MCF 10A (cell line): ENCODE measurements at regions of chr19 and their contacts with region 1.

Region 1: GRCh38 chr19:29714953-29715700 is at the start of gene C19orf12:
- DNase-seq: peak; percentile 44
- H3K4me3 Mint-ChIP-seq: peak within 1 kb of the TSS; percentile 87
- H3K27ac Mint-ChIP-seq: peak within 1 kb of the TSS; percentile 97
- H3K4me1 Mint-ChIP-seq: peaks cover 16% of the 10 kb centered on the region
- H3K27me3 Mint-ChIP-seq: no peaks in the 10 kb centered on the region
- CTCF ChIP-seq: no peak
- total RNA-seq, gene C19orf12: 20.2 and 21.6 TPM in 2 replicates

Region 2: GRCh38 chr19:29212648-29213573 is 502.2 kb before region 1 on chr19 and contains the start of gene UQCRFS1:
- CTCF ChIA-PET with region 1: no interaction called
- POLR2A ChIA-PET with region 1: no interaction called
- intact Hi-C with region 1: loop called (anchors 10 kb)
- DNase-seq: peak; percentile 95
- H3K4me3 Mint-ChIP-seq: peak within 1 kb of the TSS; percentile 89
- H3K27ac Mint-ChIP-seq: peak within 1 kb of the TSS; percentile 92
- H3K4me1 Mint-ChIP-seq: peaks cover 13% of the 10 kb centered on the region
- H3K27me3 Mint-ChIP-seq: peaks cover 4% of the 10 kb centered on the region
- CTCF ChIP-seq: no peak
- total RNA-seq, gene UQCRFS1: 40.0 and 44.4 TPM in 2 replicates

Region 3: DNA sequence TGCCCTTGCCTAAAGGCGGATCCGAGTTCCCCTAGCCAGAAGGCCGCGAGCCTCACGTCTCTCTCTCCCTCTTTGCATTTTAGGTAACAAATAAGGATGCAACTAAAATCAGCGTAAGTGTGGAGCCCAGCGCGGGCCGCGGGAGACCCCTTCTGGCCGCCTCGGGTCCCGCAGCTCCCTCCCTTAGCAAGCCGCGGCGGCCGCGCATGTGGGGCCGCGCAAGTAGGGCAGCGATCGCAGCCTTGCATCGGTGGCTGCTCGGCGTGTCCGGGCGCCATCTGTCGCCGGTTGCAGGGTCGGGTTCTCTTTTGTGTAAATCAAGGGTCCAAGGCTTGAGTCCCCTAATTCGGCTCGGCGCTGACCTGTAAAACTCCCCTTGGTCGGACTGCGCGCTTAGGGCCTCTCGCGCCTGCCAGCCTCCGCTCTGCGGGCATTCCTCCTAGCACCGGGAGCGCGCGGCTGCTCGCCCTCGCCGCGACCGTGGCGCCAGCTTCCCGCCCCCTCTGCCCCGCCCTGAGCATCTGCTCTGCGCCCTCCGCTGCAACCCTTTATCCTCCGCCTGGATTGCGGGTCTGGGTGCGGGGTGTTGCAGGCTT is 186.7 kb before region 1 on chr19:
- CTCF ChIA-PET with region 1: no interaction called
- POLR2A ChIA-PET with region 1: no interaction called
- intact Hi-C with region 1: no loop called
- DNase-seq: no peak
- H3K4me3 Mint-ChIP-seq: no peak overlapping the region
- H3K27ac Mint-ChIP-seq: no peak overlapping the region
- H3K4me1 Mint-ChIP-seq: no peaks in the 10 kb centered on the region
- H3K27me3 Mint-ChIP-seq: no peaks in the 10 kb centered on the region
- CTCF ChIP-seq: no peak

Region 4: DNA sequence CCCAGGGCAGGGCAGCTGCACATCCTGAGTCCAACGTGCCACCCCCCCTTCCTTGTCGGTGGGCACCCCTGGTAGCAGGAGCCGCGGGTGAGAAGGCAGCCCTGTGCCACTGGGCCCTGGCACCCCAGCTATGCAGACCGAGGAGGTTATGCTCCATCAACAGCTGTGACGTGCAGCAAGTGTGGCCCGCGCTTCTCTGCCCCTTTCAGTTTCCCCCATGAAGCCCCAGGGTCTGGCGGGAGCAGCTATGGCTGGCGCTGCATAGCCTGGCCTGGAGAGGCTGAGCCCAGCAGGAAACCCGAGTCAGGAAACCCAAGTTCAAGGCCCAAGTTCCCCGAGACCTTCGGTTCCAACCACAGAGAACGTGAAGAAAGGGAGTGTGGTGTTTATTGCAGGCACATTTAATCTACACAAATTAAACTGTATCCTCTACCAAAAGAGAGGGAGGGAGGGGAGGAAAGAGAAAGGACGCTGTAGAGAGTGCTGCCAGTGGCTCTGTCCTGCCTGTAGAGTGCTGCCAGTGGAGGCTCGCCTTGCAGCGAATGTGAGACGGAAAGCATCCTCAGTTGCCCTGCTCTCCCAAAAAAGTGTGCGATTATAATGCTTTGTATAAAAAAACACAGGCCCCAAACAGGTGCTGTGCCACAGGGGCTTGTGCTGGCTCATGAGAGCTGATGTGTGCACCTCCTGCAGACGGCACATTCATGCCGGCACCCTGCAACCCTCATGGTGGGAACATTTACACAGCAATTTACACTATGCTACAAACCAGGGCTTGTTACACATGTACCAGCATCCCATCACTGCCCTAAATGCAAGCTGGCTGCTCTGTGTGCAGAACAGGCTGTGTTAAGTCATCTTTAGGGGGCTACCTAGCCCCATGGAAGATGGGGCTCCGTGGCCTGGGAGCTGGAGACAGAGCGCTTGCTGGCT is 92.7 kb before region 1 on chr19:
- CTCF ChIA-PET with region 1: interaction called, 20 read pairs
- POLR2A ChIA-PET with region 1: interaction called, 4 read pairs
- intact Hi-C with region 1: no loop called
- DNase-seq: no peak
- H3K4me3 Mint-ChIP-seq: no peak overlapping the region
- H3K27ac Mint-ChIP-seq: no peak overlapping the region
- H3K4me1 Mint-ChIP-seq: no peaks in the 10 kb centered on the region
- H3K27me3 Mint-ChIP-seq: peaks cover 21% of the 10 kb centered on the region
- CTCF ChIP-seq: no peak

Region 5: GRCh38 chr19:29645911-29646310 is 69.2 kb before region 1 on chr19:
- CTCF ChIA-PET with region 1: interaction called, 14 read pairs
- POLR2A ChIA-PET with region 1: interaction called, 3 read pairs
- intact Hi-C with region 1: no loop called
- DNase-seq: peak; percentile 89
- H3K4me3 Mint-ChIP-seq: peak overlapping the region; percentile 55
- H3K27ac Mint-ChIP-seq: peak overlapping the region; percentile 46
- H3K4me1 Mint-ChIP-seq: peaks cover 20% of the 10 kb centered on the region
- H3K27me3 Mint-ChIP-seq: peaks cover 14% of the 10 kb centered on the region
- CTCF ChIP-seq: no peak

Region 6: DNA sequence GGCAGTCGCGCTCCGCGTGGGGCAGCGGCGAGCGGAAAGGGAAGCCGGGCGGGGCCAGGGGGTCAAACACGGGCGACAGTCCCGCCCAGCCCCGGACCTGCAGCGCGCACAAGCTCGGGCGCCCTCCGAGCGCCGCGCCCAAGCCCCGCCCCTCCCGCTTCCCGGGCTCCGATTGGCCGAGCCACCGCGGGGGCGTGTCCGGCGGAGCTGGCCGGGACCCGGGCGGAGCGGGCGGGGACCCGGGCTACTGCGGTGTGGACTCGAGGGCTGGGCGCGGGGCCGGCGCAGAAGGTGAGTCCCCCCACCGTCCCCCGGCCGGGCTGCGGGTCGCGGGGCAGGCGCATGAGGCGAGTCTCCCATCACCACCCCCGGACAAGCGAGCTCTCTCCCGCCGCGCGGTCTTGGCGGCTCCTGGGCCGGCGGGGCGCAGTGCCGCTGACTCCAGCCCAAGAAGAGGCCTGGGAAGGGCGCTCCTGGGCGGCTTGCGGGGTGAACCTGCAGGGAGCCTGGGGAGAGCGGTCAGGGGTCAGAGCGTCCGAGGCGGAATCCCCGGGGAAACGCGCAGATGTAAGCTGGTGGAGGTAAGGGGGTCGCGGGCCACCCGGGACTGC is 49.8 kb before region 1 on chr19 and contains the start of gene PLEKHF1:
- CTCF ChIA-PET with region 1: interaction called, 16 read pairs
- POLR2A ChIA-PET with region 1: interaction called, 4 read pairs
- intact Hi-C with region 1: loop called (anchors 2 kb)
- DNase-seq: peak; percentile 82
- H3K4me3 Mint-ChIP-seq: peak within 1 kb of the TSS; percentile 76
- H3K27ac Mint-ChIP-seq: no peak within 1 kb of the TSS
- H3K4me1 Mint-ChIP-seq: peaks cover 16% of the 10 kb centered on the region
- H3K27me3 Mint-ChIP-seq: no peaks in the 10 kb centered on the region
- CTCF ChIP-seq: no peak
- total RNA-seq, gene PLEKHF1: 2.9 and 9.6 TPM in 2 replicates

Region 7: DNA sequence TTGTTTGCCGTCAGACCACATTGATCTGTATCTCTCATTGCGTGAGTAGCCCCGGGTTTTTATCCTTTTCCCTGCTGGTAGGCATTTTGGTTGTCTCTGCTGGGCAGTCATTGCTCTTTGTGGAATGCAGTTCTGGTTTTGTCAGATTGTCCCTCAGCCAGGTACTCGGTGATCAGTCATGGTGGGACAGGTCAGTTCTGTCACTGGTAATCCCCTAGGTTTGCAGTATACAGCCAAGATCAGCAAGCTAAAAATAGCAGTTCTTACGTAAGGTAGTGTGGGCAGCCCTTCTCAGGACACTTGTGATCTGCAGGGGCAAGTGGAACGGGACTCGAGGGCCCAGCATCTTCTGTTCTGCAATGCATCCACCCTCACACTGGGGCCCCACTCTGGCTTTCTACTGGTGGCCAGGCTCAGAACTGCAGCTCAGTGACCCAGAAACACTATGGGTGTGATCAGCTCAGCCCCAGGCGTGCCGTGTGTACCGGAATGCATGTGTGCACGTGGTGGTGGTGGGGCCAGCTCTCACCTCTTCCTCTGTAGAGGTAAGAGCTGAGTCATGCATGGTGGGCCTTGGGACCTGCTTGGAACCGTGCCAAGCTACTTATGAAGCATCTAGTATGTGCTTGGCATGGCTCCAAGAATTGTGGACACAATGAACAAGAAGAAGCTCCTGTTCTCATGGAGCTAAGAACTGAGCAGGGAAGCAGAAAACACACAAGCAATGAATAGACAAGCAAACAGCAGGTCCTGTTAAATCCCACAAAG is 43.5 kb before region 1 on chr19:
- CTCF ChIA-PET with region 1: interaction called, 10 read pairs
- POLR2A ChIA-PET with region 1: no interaction called
- intact Hi-C with region 1: no loop called
- DNase-seq: peak; percentile 91
- H3K4me3 Mint-ChIP-seq: no peak overlapping the region
- H3K27ac Mint-ChIP-seq: peak overlapping the region; percentile 66
- H3K4me1 Mint-ChIP-seq: peaks cover 18% of the 10 kb centered on the region
- H3K27me3 Mint-ChIP-seq: no peaks in the 10 kb centered on the region
- CTCF ChIP-seq: peak; percentile 19

Region 8: GRCh38 chr19:29694669-29695627 is 20.2 kb before region 1 on chr19:
- CTCF ChIA-PET with region 1: interaction called, 14 read pairs
- POLR2A ChIA-PET with region 1: no interaction called
- intact Hi-C with region 1: loop called (anchors 1 kb)
- DNase-seq: peak; percentile 70
- H3K4me3 Mint-ChIP-seq: no peak overlapping the region
- H3K27ac Mint-ChIP-seq: no peak overlapping the region
- H3K4me1 Mint-ChIP-seq: no peaks in the 10 kb centered on the region
- H3K27me3 Mint-ChIP-seq: no peaks in the 10 kb centered on the region
- CTCF ChIP-seq: peak; percentile 66

Region 9: DNA sequence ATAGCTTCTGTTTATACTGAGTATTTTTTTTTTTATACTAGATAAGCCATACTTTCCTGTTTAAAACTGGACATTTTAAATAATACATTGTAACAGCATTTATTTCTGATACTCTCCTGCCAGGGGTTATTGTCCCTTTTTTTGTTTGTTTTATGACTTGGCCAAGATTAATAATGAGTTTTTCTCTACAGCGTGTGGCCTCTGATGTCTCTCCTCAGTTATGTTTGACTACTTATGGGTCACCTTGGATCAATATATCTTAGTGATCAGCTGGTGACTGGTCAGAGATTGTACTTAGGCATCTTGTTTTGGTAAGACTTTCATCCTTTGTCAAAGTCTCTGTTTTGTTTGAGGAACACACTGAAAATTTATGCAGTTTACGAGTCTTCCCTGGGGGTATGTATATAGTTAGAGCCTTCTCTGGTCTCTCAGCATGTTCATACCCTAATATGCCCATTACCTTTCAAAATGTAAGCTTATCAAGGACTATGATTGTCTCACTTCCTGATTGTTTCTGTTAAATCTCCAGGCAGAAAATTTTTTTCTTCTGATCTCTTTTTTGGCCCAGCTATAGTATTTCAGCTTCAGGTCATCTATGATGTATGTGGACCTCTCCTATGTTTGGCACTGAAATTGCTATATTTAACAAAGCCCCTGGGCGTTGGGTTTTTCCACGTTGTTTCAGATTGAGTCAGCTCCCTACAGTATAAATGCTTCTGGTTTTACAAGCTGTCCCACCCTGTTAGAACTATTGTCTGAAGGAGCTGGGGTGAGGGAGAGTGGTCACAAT is 314.8 kb after region 1 on chr19:
- CTCF ChIA-PET with region 1: no interaction called
- POLR2A ChIA-PET with region 1: no interaction called
- intact Hi-C with region 1: no loop called
- DNase-seq: peak; percentile 45
- H3K4me3 Mint-ChIP-seq: no peak overlapping the region
- H3K27ac Mint-ChIP-seq: peak overlapping the region; percentile 43
- H3K4me1 Mint-ChIP-seq: peaks cover 19% of the 10 kb centered on the region
- H3K27me3 Mint-ChIP-seq: no peaks in the 10 kb centered on the region
- CTCF ChIP-seq: no peak